CD4-positive, alpha-beta T cell (primary cell): ENCODE measurements at regions of chr7 and their contacts with region 1.

Region 1: DNA sequence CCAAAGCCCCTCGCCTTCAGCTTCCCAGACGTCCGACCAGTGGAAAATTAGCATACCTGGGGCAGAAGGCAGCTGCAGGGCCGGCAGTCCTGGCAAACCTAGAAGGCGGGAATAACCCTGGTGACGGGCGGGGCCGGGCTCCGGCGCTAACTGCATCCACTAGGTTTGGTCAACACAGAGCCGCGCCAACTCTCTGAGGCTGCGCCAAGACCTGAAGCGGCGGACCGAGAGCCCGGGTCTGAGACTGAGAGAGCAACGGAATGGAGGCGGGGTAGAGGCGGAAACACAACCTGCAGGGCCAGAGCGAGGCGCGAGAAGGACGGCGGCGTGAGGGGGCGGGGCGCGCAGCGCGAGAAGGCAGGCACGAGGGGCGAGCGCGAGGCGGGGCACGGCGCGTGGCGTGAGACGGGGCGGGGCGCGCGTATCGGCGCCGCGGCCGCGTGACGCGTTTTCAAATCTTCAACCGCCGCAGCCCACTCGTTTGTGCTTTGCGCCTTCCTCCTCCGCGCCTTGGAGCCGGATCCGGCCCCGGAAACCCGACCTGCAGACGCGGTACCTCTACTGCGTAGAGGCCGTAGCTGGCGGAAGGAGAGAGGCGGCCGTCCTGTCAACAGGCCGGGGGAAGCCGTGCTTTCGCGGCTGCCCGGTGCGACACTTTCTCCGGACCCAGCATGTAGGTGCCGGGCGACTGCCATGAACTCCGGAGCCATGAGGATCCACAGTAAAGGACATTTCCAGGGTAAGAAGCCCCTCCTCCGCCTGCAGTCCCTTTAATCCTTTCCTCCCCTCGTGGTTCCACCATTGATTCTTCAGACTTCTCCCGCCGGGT is at the starts of genes DBF4 and SLC25A40:
- DNase-seq: peak; percentile 88 to 98 (median 95)
- ATAC-seq: peak; percentile 86
- H3K4me3 ChIP-seq: peak within 1 kb of the TSS; percentile 97
- H3K4me3 Mint-ChIP-seq: peak within 1 kb of the TSS; percentile 98
- H3K27ac ChIP-seq: peak within 1 kb of the TSS; percentile 84 to 94
- H3K27ac Mint-ChIP-seq: peak within 1 kb of the TSS; percentile 98
- H3K4me1 ChIP-seq: peaks cover 9% of the 10 kb centered on the region
- H3K4me1 Mint-ChIP-seq: peaks cover 63% of the 10 kb centered on the region
- H3K27me3 ChIP-seq: no peaks in the 10 kb centered on the region
- H3K27me3 Mint-ChIP-seq: no peaks in the 10 kb centered on the region
- CTCF ChIP-seq: no peak
- total RNA-seq, gene DBF4: 58.1 to 61.9 TPM
- total RNA-seq, gene SLC25A40: 9.4 to 11.1 TPM

Region 2: DNA sequence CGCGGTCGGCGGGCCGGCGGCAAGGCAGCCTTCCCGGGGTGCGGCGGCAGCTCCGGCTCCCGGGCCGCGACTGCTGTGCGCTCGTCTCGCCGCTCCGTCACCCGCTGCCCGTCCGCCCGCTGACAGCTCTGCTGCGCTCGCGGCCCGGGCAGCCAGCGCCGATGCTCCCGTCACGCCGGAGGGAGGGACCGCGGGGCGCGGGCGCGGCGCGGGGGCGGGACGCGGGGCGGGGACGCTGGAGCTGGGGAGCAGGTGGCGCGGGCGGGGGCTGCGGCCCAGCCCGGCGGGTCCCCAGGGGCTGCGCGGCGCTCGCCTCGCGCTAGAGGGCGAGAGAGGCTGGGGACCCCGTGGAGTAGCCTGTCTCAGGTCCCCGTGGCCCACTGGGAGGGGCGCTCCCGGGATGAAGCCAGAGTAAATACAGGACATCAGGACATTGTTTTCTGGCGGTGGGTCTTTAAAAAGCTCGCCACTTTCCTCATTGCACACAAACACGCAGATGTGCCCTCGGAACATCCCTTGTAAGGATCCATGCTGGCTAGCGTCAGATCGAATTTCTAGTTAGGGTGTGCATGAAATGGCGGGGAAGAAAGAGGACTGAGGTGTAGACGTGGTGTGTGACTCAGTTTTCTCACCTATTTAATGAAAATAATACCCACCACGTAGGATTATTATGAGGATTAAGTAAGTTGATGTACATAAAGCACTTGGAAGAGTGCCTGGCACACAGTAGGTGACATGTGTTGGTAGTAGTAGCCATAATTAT is 816.5 kb before region 1 on chr7 and contains the start of gene ELAPOR2:
- CTCF ChIA-PET with region 1: no interaction called
- POLR2A ChIA-PET with region 1: no interaction called
- intact Hi-C with region 1: loop called in 1 of 2 experiments (anchors 10 kb)
- DNase-seq: peak; percentile 61 to 91 (median 76)
- ATAC-seq: peak; percentile 93
- H3K4me3 ChIP-seq: peak within 1 kb of the TSS; percentile 66
- H3K4me3 Mint-ChIP-seq: peak within 1 kb of the TSS; percentile 92
- H3K27ac ChIP-seq: no peak within 1 kb of the TSS
- H3K27ac Mint-ChIP-seq: peak within 1 kb of the TSS; percentile 75
- H3K4me1 ChIP-seq: peaks cover 12% of the 10 kb centered on the region
- H3K4me1 Mint-ChIP-seq: peaks cover 13% of the 10 kb centered on the region
- H3K27me3 ChIP-seq: peaks cover 0 to 3% of the 10 kb centered on the region in 2 experiments
- H3K27me3 Mint-ChIP-seq: peaks cover 13% of the 10 kb centered on the region
- CTCF ChIP-seq: peak; percentile 46
- total RNA-seq, gene ELAPOR2: 7.2 to 7.7 TPM

Region 3: GRCh38 chr7:87628780-87629569 is 247.3 kb before region 1 on chr7:
- CTCF ChIA-PET with region 1: no interaction called
- POLR2A ChIA-PET with region 1: no interaction called
- intact Hi-C with region 1: loop called (anchors 5 kb)
- DNase-seq: peak in 11 of 14 experiments; percentile 1 to 50 (median 15)
- ATAC-seq: peak; percentile 28
- H3K4me3 ChIP-seq: peak overlapping the region; percentile 69
- H3K4me3 Mint-ChIP-seq: peak overlapping the region; percentile 87
- H3K27ac ChIP-seq: no peak overlapping the region
- H3K27ac Mint-ChIP-seq: peak overlapping the region; percentile 78
- H3K4me1 ChIP-seq: peaks cover 18% of the 10 kb centered on the region
- H3K4me1 Mint-ChIP-seq: peaks cover 18% of the 10 kb centered on the region
- H3K27me3 ChIP-seq: peaks cover 8 to 11% of the 10 kb centered on the region in 2 experiments
- H3K27me3 Mint-ChIP-seq: peaks cover 16% of the 10 kb centered on the region
- CTCF ChIP-seq: no peak

Region 4: GRCh38 chr7:87933945-87934698 is 57.9 kb after region 1 on chr7 and contains the start of gene ADAM22:
- CTCF ChIA-PET with region 1: no interaction called
- POLR2A ChIA-PET with region 1: interaction called, 11 read pairs
- intact Hi-C with region 1: no loop called
- DNase-seq: peak; percentile 55 to 92 (median 75)
- ATAC-seq: peak; percentile 92
- H3K4me3 ChIP-seq: peak within 1 kb of the TSS; percentile 65
- H3K4me3 Mint-ChIP-seq: peak within 1 kb of the TSS; percentile 88
- H3K27ac ChIP-seq: no peak within 1 kb of the TSS
- H3K27ac Mint-ChIP-seq: no peak within 1 kb of the TSS
- H3K4me1 ChIP-seq: peaks cover 15% of the 10 kb centered on the region
- H3K4me1 Mint-ChIP-seq: peaks cover 3% of the 10 kb centered on the region
- H3K27me3 ChIP-seq: no peaks in the 10 kb centered on the region
- H3K27me3 Mint-ChIP-seq: peaks cover 8% of the 10 kb centered on the region
- CTCF ChIP-seq: no peak
- total RNA-seq, gene ADAM22: 0.60 to 0.64 TPM

Region 5: GRCh38 chr7:88219781-88220747 is 343.8 kb after region 1 on chr7 and contains the start of gene SRI:
- CTCF ChIA-PET with region 1: no interaction called
- POLR2A ChIA-PET with region 1: no interaction called
- intact Hi-C with region 1: loop called in 1 of 2 experiments (anchors 5 kb)
- DNase-seq: peak; percentile 83 to 96 (median 90)
- ATAC-seq: peak; percentile 97
- H3K4me3 ChIP-seq: peak within 1 kb of the TSS; percentile 74
- H3K4me3 Mint-ChIP-seq: peak within 1 kb of the TSS; percentile 99
- H3K27ac ChIP-seq: peak within 1 kb of the TSS; percentile 58 to 69
- H3K27ac Mint-ChIP-seq: peak within 1 kb of the TSS; percentile 81
- H3K4me1 ChIP-seq: peaks cover 24% of the 10 kb centered on the region
- H3K4me1 Mint-ChIP-seq: peaks cover 39% of the 10 kb centered on the region
- H3K27me3 ChIP-seq: no peaks in the 10 kb centered on the region
- H3K27me3 Mint-ChIP-seq: no peaks in the 10 kb centered on the region
- CTCF ChIP-seq: peak; percentile 96
- total RNA-seq, gene SRI: 44.3 to 45.7 TPM